ENCODE measurements at regions of chr4 and their contacts with region 1.

Region 1: GRCh38 chr4:19224820-19225219 is 1026.9 kb upstream of the SLIT2 start:
- DNase-seq: peak in 2 of 4 donors; percentile 18 to 24
- ATAC-seq: peak; percentile 33
- H3K4me3 ChIP-seq: no peak overlapping the region
- H3K27ac ChIP-seq: no peak overlapping the region
- H3K4me1 ChIP-seq: no peaks in the 10 kb centered on the region
- H3K27me3 ChIP-seq: no peaks in the 10 kb centered on the region
- CTCF ChIP-seq: peak in 1 of 2 donors; percentile 38

Region 2: GRCh38 chr4:19095491-19096046 is 129.3 kb before region 1 on chr4:
- intact Hi-C with region 1: no loop called
- DNase-seq: no peak
- ATAC-seq: no peak
- H3K4me3 ChIP-seq: no peak overlapping the region
- H3K27ac ChIP-seq: no peak overlapping the region
- H3K4me1 ChIP-seq: no peaks in the 10 kb centered on the region
- H3K27me3 ChIP-seq: no peaks in the 10 kb centered on the region
- CTCF ChIP-seq: no peak

Region 3: GRCh38 chr4:20248155-20248558 is 1023.3 kb after region 1 on chr4:
- intact Hi-C with region 1: loop called in 1 of 2 experiments (anchors 10 kb)
- DNase-seq: peak in 1 of 4 donors; percentile 70
- ATAC-seq: peak; percentile 29
- H3K4me3 ChIP-seq: no peak overlapping the region
- H3K27ac ChIP-seq: no peak overlapping the region
- H3K4me1 ChIP-seq: peaks cover 0 to 9% of the 10 kb centered on the region in 2 donors
- H3K27me3 ChIP-seq: peaks cover 1 to 34% of the 10 kb centered on the region in 2 donors
- CTCF ChIP-seq: peak; percentile 31 to 63

Measured in left lung (tissue), 14 donors.